HepG2 (cell line): ENCODE measurements at regions of chr6 and their contacts with region 1.

Region 1: GRCh38 chr6:122381497-122382265 is 17.8 kb upstream of the HSF2 start:
- DNase-seq: peak; percentile 69
- ATAC-seq: peak; percentile 98
- H3K4me3 ChIP-seq: no peak overlapping the region
- H3K27ac ChIP-seq: no peak overlapping the region
- H3K4me1 ChIP-seq: no peaks in the 10 kb centered on the region
- H3K27me3 ChIP-seq: 0 out of 5 replicates have a peak, but pooled peaks cover 0 to 5% of the 10 kb centered on the region in 2 experiments
- CTCF ChIP-seq: peak; percentile 81
- EP300 ChIP-seq: no peak
- POLR2A ChIP-seq: no peak
- RAD21 ChIP-seq: peak; percentile 46; the same call in 1 of the 2 replicates

Region 2: DNA sequence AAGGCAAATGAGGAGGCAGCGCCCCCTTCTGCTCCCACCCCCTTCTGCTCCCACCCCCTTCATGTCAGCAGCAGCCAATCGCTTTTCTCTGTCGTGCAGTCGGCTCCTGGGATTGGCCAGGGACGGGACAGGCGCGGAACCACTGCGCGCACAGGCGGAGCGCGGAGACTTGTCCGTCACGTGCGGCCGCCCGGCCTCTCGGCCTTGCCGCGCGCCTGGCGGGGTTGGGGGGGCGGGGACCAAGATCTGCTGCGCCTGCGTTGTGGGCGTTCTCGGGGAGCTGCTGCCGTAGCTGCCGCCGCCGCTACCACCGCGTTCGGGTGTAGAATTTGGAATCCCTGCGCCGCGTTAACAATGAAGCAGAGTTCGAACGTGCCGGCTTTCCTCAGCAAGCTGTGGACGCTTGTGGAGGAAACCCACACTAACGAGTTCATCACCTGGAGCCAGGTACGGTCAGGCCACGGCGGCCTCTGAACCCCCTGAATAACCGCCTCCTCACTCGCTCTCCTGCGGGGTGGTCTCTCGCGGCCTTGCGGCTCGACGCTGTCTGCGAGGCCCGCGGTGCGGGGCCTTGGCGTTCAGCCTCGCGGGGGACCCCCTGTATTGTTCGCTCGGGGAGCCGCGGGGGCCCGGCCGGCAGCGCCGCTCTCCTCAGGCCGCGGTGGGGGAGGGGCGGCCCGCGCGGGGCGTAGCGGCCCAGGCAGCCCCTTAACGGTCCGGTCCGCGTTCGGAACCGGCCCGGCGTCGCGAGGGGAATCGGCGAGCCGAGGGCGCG is 17.9 kb after region 1 on chr6 and contains the start of gene HSF2:
- CTCF ChIA-PET with region 1: no interaction called
- POLR2A ChIA-PET with region 1: no interaction called
- in situ Hi-C with region 1: no loop called
- intact Hi-C with region 1: loop called (anchors 1 kb)
- DNase-seq: peak; percentile 96
- ATAC-seq: peak; percentile 100
- H3K4me3 ChIP-seq: peak within 1 kb of the TSS; percentile 65 to 100 (median 97)
- H3K27ac ChIP-seq: peak within 1 kb of the TSS; percentile 88
- H3K4me1 ChIP-seq: peaks cover 37% of the 10 kb centered on the region
- H3K27me3 ChIP-seq: peaks cover 0 to 2% of the 10 kb centered on the region in 2 experiments; a peak in 1 of 5 replicates
- CTCF ChIP-seq: peak; percentile 61
- EP300 ChIP-seq: no peak
- POLR2A ChIP-seq: peak; percentile 78 to 81
- RAD21 ChIP-seq: peak; percentile 32
- total RNA-seq, gene HSF2: 24.8 and 27.6 TPM in 2 replicates